Sciatic nerve (tissue), 2 donors: ENCODE measurements at regions of chr22 and their contacts with region 1.

Region 1: DNA sequence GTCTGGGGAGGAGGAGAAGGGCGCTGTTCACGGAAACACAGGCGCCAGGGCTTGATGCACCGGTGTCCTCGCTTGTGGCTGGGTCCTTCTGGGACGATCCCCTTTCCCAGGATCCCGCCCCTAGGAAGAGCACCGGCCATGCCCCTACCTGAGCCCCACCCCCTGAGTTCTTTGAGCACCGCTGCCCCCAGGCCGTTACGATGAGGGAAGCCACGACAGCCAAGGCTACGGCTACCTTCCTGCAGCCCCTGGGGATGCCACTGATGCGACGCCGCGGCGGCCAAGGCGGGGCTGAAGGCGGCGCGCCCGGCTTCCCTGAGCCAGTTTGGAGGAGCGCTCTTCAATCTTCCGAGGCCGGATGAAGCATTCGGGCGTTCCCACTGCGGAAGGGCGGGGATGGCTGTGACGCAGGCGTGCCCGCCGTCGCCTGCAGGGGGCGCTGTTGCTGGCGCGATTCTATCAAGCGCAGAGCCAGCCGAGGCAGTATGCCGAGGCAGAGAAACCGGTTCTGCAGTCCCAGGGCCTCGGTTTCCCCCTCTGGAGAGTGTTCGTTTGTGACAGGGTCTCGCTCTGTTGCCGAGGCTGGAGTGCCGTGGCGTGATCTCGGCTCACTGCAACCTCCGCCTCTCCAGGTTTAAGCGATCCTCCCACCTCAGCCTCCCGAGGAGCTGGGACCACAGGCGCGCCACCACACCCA is 9.7 kb upstream of the NEFH start:
- DNase-seq: no peak
- ATAC-seq: peak; percentile 48

Region 2: DNA sequence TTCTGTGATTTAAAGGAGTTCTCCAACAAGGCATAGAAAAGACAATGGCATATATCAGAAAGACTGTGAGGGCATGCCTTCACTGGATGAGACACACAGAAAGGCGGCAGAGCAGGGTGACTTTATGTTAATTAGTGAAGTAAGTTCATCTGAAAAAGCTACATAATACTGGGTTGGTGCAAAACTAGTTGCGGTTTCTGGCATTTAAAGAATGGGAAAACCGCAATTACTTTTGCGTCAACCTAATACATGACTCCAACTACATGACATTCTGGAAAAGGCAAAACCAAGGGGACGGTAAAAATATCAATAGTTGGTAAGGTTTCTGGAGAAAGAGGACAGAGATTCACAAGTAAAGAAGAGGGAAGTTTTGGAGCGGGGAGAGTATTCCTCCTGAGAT is 26.9 kb before region 1 on chr22:
- intact Hi-C with region 1: loop called (anchors 1 kb)
- DNase-seq: no peak
- ATAC-seq: no peak